ENCODE measurements at regions of chr5 and their contacts with region 1.

Region 1: DNA sequence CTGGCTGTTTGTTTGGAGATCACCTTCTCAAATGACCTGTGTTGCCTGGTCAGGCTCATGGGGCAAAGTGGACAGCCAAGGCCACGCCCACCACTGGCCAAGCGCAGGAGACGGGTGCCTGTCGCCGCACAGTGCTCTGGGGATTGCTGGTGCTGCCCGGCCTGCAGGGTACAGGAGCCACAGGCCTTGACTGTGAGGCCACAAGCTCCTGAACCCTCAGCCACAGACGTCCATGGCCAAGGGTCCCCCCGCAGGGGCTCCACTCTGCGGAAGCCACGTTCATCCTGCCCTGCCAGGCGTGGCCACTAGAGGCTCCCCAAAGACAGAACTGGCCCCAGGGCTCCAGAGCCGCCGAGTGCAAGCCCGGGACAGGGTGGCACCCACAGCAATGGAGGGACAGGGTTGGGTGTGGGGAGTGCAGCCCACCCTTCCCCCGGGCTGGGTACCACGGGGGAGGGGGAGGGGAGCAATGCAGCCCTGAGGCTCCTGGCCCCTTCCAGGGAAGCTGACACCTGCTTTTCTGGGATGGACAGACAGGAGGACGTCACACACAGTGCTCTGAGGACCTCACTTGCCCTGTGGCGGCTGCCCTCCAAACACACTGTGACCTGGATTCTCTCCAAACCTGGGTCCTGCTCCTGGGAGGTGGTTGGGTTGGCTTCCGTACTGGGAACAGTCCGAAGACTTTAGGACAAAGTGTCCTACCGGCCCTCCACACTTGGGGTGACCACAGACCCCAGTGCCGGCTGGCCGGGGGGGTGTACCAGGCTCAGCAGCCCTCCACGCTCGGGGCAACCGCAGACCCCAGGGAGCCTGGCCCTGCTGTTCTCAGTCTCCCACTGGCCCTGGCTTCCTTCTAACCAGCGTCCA is 21.5 kb downstream of the TPPP start:
- DNase-seq: peak; percentile 77 to 87 (median 87)
- ATAC-seq: peak; percentile 62 to 82 (median 76)
- H3K4me3 ChIP-seq: peak overlapping the region in 1 of 3 donors; percentile 41
- H3K27ac ChIP-seq: peak overlapping the region in 2 of 3 donors; percentile 65 to 86
- H3K4me1 ChIP-seq: peaks cover 0 to 42% (median 26%) of the 10 kb centered on the region in 4 donors
- H3K27me3 ChIP-seq: no peaks in the 10 kb centered on the region
- CTCF ChIP-seq: peak; percentile 90 to 96 (median 94)
- POLR2A ChIP-seq: no peak

Region 2: DNA sequence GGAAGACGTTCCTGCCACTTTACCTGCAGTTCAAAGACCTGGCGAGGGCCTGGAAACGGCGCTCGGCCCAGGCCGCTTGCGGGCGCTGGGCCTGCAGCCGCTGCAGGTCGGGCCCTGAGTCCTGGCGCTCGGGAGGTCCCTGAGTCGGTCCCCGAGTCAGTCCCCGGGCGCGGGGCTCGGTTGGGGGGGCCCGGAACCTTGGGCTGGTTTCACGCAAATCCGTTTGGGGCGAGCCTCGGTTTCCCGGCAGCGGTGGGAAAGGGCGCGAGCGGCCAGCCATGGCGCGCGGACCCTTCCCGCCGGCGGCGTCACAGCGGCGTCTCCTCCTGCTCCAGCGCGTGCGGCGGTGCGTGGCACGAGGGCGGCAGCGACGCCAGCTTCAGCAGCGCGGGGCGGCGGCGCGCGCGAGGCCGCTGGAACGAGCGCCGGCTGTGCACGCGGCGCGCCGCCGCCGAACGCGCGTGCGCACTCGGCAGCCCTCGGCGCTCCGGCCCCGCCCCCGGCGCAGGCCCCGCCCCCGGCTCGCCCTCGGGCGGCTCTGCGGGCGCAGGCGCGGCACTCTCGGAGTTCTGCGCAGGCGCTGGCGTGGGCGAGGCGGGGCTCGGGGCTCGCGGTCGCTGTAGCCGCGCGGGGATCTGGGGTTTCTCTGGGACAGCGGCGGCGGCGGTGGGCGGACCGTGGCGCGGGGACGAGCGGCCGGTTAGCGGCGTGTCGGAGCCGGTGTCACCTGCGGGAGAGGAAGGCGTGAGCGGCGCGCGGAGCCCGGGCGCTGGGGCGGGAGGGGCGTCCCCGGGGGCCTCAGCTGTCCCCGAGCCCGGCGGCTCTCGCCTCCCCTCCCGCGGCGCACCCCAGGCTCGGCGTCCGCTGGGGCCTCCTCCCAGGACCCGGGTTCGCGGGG is 198.8 kb before region 1 on chr5:
- intact Hi-C with region 1: no loop called
- DNase-seq: peak; percentile 91 to 92 (median 91)
- ATAC-seq: peak; percentile 80 to 91 (median 82)
- H3K4me3 ChIP-seq: peak overlapping the region; percentile 79 to 89 (median 83)
- H3K27ac ChIP-seq: peak overlapping the region; percentile 62 to 68 (median 66)
- H3K4me1 ChIP-seq: peaks cover 0 to 17% (median 2%) of the 10 kb centered on the region in 4 donors
- H3K27me3 ChIP-seq: no peaks in the 10 kb centered on the region
- CTCF ChIP-seq: no peak
- POLR2A ChIP-seq: peak; percentile 52

Region 3: DNA sequence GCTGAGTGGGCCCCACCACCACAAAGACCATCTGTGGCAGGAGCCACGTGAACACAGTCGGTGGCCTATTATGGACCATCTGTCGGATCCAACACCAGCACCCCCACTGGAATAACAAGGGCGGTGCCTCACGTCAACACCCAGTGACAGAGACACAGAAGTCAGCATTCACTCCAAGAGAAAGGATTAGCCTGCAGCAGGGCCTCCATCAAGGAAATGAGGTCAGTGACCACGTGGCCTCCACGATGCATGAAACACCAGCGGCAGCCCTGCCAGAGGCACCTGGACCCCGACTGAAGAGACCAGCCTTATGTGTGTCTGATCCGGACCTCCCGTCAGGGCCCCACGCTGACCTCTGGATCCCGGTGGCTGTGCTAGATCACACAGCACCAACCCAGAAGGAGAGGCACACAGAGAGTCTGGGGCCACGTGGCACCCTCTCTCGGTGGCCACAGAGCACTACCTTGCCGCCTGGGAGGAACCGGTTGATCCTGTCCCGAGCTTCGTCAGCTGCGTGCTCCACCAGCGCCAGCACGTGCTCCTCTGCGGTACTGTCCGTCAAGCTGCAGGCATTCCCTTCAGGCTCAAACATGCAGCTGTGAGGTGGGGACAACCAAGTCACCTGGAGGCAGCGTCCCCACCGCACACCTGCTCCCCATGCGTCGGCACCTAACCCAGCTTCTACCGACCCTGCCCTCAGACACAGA is 211.9 kb after region 1 on chr5:
- intact Hi-C with region 1: no loop called
- DNase-seq: peak in 1 of 3 donors; percentile 35
- ATAC-seq: no peak
- H3K4me3 ChIP-seq: no peak overlapping the region
- H3K27ac ChIP-seq: no peak overlapping the region
- H3K4me1 ChIP-seq: no peaks in the 10 kb centered on the region
- H3K27me3 ChIP-seq: no peaks in the 10 kb centered on the region
- CTCF ChIP-seq: no peak
- POLR2A ChIP-seq: no peak

Region 4: GRCh38 chr5:909086-909485 is 237.4 kb after region 1 on chr5:
- intact Hi-C with region 1: loop called in 1 of 2 experiments (anchors 5 kb)
- DNase-seq: no peak
- ATAC-seq: no peak
- H3K4me3 ChIP-seq: no peak overlapping the region
- H3K27ac ChIP-seq: no peak overlapping the region
- H3K4me1 ChIP-seq: no peaks in the 10 kb centered on the region
- H3K27me3 ChIP-seq: no peaks in the 10 kb centered on the region
- CTCF ChIP-seq: no peak
- POLR2A ChIP-seq: no peak